Esophagus muscularis mucosa (tissue), 4 donors: ENCODE measurements at regions of chr17 and their contacts with region 1.

Region 1: DNA sequence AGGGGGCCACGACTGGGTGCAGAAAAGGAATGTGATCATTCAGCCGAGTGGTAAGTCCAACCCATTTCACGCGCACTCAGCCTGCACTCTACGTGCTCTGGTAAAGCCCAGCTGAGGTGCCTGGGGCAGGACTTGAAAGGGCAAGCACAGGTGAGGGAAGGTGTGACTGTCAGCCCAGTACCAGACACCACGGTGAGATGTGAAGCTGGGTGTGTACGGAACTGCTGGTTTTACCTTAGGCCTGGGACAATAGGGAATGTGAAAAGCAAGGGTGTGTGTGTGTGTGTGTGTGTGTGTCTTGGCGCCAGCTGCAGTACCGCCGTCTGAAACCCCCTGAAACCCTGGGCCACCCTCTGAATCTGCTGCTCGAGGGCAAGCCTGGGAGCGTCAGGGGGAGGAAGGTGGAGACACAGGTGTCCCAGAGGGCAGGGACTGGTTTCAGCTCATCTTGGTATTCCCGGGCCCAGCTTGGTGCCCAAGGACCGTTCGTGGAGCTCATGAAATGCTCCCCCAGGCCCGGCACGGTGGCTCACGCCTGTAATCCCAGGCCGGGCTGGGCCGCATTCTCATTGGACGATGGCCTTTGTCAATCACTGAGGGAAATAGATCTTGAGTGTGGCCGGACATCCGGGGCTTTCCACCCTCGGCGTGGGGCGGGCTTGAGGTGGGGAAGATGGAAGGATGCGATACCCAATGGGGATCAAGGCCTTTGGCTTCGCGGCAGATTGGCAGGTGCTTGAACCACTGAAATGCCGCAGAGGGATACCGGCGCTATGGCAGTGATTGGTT is 27.8 kb upstream of the ST6GALNAC1 start:
- DNase-seq: peak; percentile 100
- H3K4me3 ChIP-seq: peak overlapping the region; percentile 57 to 72 (median 66)
- H3K27ac ChIP-seq: peak overlapping the region; percentile 76 to 90 (median 86)
- H3K4me1 ChIP-seq: peaks cover 14 to 23% (median 19%) of the 10 kb centered on the region in 4 donors
- H3K27me3 ChIP-seq: peaks cover 0 to 5% (median 0%) of the 10 kb centered on the region in 4 donors
- CTCF ChIP-seq: no peak
- EP300 ChIP-seq: no peak
- POLR2A ChIP-seq: peak; percentile 21

Region 2: DNA sequence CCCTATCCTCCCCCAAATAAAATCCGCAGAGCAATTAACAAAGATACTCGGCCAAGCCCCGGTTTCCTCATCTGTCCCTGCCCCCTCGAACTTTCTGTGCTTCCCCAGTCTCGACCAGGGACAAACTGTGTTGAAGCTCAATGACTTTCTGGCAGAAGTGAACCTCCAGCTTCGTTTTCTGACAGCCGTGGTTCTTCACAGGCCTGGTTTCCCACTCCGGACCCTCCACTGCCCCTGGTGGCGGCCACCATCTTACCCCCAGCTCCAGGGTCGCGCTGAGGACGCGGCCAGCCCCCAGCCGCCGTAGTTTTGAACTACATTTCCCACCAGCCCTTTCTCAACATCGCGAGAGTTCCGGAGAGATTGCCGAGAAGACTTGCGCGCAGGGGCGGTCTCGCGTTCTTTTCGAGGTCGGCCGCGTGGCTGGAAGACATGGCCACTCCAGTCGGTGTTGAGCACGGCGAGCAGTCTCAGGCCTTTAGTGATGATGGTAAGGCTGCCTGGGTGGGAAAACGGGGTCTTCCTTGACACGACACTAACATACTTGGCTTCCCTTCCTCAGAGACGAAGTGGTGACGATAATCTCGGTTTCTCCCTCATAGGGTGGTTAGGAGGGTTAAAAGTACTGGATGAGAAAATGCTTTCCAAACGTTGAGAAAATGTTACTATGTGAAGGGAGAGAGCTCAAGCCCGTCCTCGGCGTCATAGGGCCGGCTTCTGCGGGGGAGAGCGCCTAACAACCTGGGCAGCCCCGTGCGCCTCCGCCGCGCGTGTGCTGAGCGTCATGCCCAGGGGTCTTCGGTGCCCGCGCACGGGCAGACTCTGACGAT is 113.7 kb before region 1 on chr17:
- intact Hi-C with region 1: loop called (anchors 5 kb)
- DNase-seq: peak; percentile 98
- H3K4me3 ChIP-seq: peak overlapping the region; percentile 64 to 75 (median 71)
- H3K27ac ChIP-seq: peak overlapping the region; percentile 83 to 93 (median 86)
- H3K4me1 ChIP-seq: peaks cover 53 to 61% (median 56%) of the 10 kb centered on the region in 4 donors
- H3K27me3 ChIP-seq: no peaks in the 10 kb centered on the region
- CTCF ChIP-seq: peak; percentile 37 to 66 (median 64)
- EP300 ChIP-seq: no peak
- POLR2A ChIP-seq: peak; percentile 68

Region 3: GRCh38 chr17:76816590-76817135 is 145.3 kb after region 1 on chr17:
- intact Hi-C with region 1: no loop called
- DNase-seq: no peak
- H3K4me3 ChIP-seq: no peak overlapping the region
- H3K27ac ChIP-seq: no peak overlapping the region
- H3K4me1 ChIP-seq: no peaks in the 10 kb centered on the region
- H3K27me3 ChIP-seq: peaks cover 0 to 45% (median 0%) of the 10 kb centered on the region in 4 donors
- CTCF ChIP-seq: peak in 2 of 3 experiments; percentile 25 to 38
- EP300 ChIP-seq: no peak
- POLR2A ChIP-seq: no peak